IMR-90 (cell line): ENCODE measurements at regions of chr3 and their contacts with region 1.

Region 1: DNA sequence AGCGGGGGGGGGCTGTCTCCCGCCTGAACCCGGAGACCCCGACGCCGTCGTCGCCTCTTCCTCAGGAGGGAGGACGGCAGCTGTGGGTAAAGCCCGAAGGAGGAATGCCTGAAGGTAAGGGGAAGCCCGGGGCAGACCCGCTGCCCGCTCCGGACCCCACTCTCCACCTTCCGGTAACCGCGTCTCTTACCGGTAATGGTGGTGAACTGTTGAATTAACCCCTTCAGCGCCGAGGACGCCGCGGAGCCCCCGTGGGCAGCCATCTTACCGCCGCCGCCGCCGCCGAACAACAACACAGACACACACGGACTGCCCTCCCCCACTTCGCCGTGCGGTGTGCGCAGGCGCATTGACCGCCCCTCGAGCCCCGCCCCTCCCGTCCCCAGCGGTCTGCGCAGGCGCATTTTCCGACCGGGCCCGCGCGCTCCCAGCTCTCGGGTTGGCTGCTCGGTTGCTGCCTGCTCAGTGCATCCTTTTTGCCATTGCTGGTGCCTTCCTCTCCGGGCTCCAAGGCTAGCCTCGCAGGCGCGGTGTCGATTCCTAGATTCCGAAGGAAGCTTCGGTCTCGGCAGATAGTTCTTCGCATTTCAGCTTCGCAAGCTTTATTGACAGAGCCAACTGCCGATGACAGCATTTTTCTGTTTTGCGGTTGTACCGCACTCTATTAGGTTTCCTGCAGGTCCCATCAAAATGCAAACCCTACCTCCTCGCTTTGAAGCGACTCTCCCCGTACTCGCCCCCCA is at the start of gene UBXN7:
- DNase-seq: peak; percentile 90
- ATAC-seq: peak; percentile 95
- H3K4me3 ChIP-seq: peak within 1 kb of the TSS; percentile 86
- H3K27ac ChIP-seq: peak within 1 kb of the TSS; percentile 82
- H3K4me1 ChIP-seq: peaks cover 3% of the 10 kb centered on the region
- H3K27me3 ChIP-seq: no peaks in the 10 kb centered on the region
- CTCF ChIP-seq: no peak
- POLR2A ChIP-seq: no peak
- RAD21 ChIP-seq: no peak
- total RNA-seq, gene UBXN7: 16.1 and 18.9 TPM in 2 replicates

Region 2: DNA sequence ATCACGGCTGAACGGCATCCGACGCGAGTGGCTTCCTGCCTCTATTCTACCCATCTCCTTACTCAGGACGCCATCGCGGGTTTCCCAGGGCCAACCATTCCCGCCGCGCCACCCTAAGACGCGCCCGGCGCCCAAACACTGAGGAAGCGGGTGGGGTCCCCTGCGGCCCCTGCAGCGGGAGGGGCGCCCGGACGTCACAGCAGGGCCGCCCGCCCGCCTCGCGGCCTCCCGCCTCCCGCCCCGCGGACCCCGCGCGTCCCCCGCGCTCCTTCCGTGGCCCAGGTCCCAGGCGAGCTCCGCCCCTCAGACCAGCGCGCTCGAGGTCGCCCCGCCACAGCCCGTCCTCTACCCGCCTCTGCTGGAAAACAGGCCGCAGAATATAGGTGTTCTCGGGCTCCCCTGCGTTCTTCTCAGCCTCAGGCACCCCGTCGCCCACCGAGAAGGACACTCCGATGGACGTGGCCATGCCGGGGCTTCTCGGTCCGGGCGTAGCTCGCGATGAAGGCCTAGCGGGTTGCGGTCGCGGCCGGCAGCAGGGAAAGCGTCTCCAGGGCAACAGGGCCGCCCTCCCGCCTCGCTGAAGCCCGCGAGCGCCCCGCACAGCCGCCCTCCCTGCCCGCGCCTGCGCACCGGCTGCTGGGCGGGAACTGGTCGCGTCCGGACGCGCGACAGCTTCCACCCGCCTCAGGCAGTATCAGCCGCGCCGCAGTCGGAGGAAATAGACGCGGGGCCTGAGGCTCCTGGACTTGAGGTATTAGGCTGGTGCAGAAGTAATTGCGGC is 114.4 kb before region 1 on chr3 and contains the start of gene DYNLT2B:
- CTCF ChIA-PET with region 1: no interaction called
- POLR2A ChIA-PET with region 1: no interaction called
- dilution Hi-C with region 1: no loop called
- in situ Hi-C with region 1: no loop called
- intact Hi-C with region 1: loop called (anchors 1 kb)
- DNase-seq: peak; percentile 84
- ATAC-seq: peak; percentile 95
- H3K4me3 ChIP-seq: peak within 1 kb of the TSS; percentile 66
- H3K27ac ChIP-seq: peak within 1 kb of the TSS; percentile 76
- H3K4me1 ChIP-seq: no peaks in the 10 kb centered on the region
- H3K27me3 ChIP-seq: no peaks in the 10 kb centered on the region
- CTCF ChIP-seq: no peak; the same call in 1 of the 2 replicates
- POLR2A ChIP-seq: no peak; the same call in 1 of the 2 replicates
- RAD21 ChIP-seq: no peak
- total RNA-seq, gene DYNLT2B: 2.2 and 4.2 TPM in 2 replicates

Region 3: GRCh38 chr3:196388956-196389355 is 43.4 kb before region 1 on chr3:
- CTCF ChIA-PET with region 1: no interaction called
- POLR2A ChIA-PET with region 1: no interaction called
- dilution Hi-C with region 1: no loop called
- in situ Hi-C with region 1: no loop called
- intact Hi-C with region 1: no loop called
- DNase-seq: no peak
- ATAC-seq: no peak
- H3K4me3 ChIP-seq: no peak overlapping the region
- H3K27ac ChIP-seq: no peak overlapping the region
- H3K4me1 ChIP-seq: no peaks in the 10 kb centered on the region
- H3K27me3 ChIP-seq: no peaks in the 10 kb centered on the region
- CTCF ChIP-seq: no peak
- POLR2A ChIP-seq: no peak
- RAD21 ChIP-seq: no peak

Region 4: GRCh38 chr3:196502775-196503195 is 70.5 kb after region 1 on chr3:
- CTCF ChIA-PET with region 1: no interaction called
- POLR2A ChIA-PET with region 1: no interaction called
- dilution Hi-C with region 1: no loop called
- in situ Hi-C with region 1: no loop called
- intact Hi-C with region 1: loop called (anchors 2 kb)
- DNase-seq: peak; percentile 92
- ATAC-seq: peak; percentile 24
- H3K4me3 ChIP-seq: peak overlapping the region; percentile 87
- H3K27ac ChIP-seq: peak overlapping the region; percentile 94
- H3K4me1 ChIP-seq: peaks cover 2% of the 10 kb centered on the region; the same call in 1 of the 2 replicates
- H3K27me3 ChIP-seq: no peaks in the 10 kb centered on the region
- CTCF ChIP-seq: no peak
- POLR2A ChIP-seq: peak; percentile 71
- RAD21 ChIP-seq: no peak